CD8-positive, alpha-beta T cell (primary cell): ENCODE measurements at regions of chr5 and their contacts with region 1.

Region 1: GRCh38 chr5:52915176-52915875 is 73.8 kb upstream of the ITGA2 start:
- DNase-seq: peak; percentile 10 to 76 (median 45)
- ATAC-seq: peak; percentile 97
- H3K4me3 ChIP-seq: no peak overlapping the region
- H3K4me3 Mint-ChIP-seq: peak overlapping the region; percentile 50
- H3K27ac ChIP-seq: no peak overlapping the region
- H3K27ac Mint-ChIP-seq: no peak overlapping the region
- H3K4me1 ChIP-seq: no peaks in the 10 kb centered on the region
- H3K4me1 Mint-ChIP-seq: peaks cover 6% of the 10 kb centered on the region
- H3K27me3 ChIP-seq: no peaks in the 10 kb centered on the region
- H3K27me3 Mint-ChIP-seq: no peaks in the 10 kb centered on the region
- CTCF ChIP-seq: peak; percentile 88

Region 2: DNA sequence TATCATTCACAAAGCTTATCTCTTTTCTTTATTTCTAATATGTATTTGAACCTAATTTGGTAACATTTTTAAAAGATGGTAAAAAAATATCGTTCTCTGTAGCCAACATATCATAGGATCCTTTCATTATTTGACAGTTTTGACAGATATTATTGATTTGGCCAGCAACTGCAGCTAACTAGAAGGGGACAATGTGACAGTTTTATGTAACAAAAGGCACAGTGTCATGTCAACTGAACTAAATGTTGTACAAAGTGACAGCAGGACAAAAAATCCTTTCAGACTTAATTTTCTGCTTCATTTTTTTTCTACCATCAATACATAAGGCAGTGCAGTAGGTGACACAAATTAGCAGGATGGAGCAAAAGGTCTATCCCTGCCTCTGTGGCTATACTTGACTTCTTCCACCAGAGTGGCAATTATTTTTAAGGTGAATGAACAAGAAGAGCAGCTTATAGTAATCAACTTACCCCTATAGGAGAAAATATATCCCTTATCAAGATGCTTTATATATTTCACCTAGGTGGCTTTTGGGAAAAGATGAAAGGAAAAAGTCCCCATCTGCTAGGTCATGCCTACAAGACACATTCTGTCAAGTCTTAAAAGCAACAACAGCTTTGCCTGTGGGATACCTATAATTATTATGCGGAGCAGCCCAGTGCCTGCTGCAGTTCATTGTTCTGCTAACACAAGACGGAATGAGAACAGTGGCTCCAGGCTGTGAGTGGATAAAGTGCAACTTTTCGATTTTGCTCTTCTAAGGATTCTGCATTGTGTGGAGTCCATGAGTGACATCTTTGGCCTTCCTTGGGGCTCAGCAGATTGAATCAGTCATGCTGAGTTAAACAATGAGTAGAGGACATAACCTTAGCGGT is 837.1 kb before region 1 on chr5:
- CTCF ChIA-PET with region 1: no interaction called
- POLR2A ChIA-PET with region 1: no interaction called
- intact Hi-C with region 1: no loop called
- DNase-seq: no peak
- ATAC-seq: no peak
- H3K4me3 ChIP-seq: no peak overlapping the region
- H3K4me3 Mint-ChIP-seq: no peak overlapping the region
- H3K27ac ChIP-seq: no peak overlapping the region
- H3K27ac Mint-ChIP-seq: no peak overlapping the region
- H3K4me1 ChIP-seq: no peaks in the 10 kb centered on the region
- H3K4me1 Mint-ChIP-seq: no peaks in the 10 kb centered on the region
- H3K27me3 ChIP-seq: no peaks in the 10 kb centered on the region
- H3K27me3 Mint-ChIP-seq: no peaks in the 10 kb centered on the region
- CTCF ChIP-seq: no peak

Region 3: GRCh38 chr5:52665559-52665958 is 249.8 kb before region 1 on chr5:
- CTCF ChIA-PET with region 1: interaction called, 6 read pairs
- POLR2A ChIA-PET with region 1: no interaction called
- intact Hi-C with region 1: loop called (anchors 1 to 10 kb)
- DNase-seq: no peak
- ATAC-seq: no peak
- H3K4me3 ChIP-seq: no peak overlapping the region
- H3K4me3 Mint-ChIP-seq: no peak overlapping the region
- H3K27ac ChIP-seq: no peak overlapping the region
- H3K27ac Mint-ChIP-seq: no peak overlapping the region
- H3K4me1 ChIP-seq: no peaks in the 10 kb centered on the region
- H3K4me1 Mint-ChIP-seq: peaks cover 2% of the 10 kb centered on the region
- H3K27me3 ChIP-seq: no peaks in the 10 kb centered on the region
- H3K27me3 Mint-ChIP-seq: no peaks in the 10 kb centered on the region
- CTCF ChIP-seq: no peak

Region 4: DNA sequence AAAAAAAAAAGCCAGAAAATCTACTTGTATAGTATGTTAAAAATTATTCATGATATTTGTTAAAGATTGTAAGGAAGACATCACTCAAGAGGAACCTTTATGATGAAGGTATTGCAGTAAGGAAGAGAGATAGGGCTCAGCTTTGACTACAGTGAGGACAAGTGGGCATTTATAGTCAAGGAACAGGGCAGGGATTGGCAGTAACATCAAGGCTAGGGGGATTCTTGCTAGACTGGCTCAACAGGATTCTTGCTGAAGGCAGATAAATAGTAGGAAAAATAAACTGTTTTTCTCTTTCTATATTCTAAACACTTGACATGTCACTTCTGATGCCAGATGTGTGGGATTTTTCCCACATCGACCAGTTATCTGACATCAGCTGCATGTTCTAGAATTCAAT is 30.9 kb before region 1 on chr5:
- CTCF ChIA-PET with region 1: no interaction called
- POLR2A ChIA-PET with region 1: no interaction called
- intact Hi-C with region 1: no loop called
- DNase-seq: no peak
- ATAC-seq: no peak
- H3K4me3 ChIP-seq: no peak overlapping the region
- H3K4me3 Mint-ChIP-seq: no peak overlapping the region
- H3K27ac ChIP-seq: no peak overlapping the region
- H3K27ac Mint-ChIP-seq: no peak overlapping the region
- H3K4me1 ChIP-seq: no peaks in the 10 kb centered on the region
- H3K4me1 Mint-ChIP-seq: no peaks in the 10 kb centered on the region
- H3K27me3 ChIP-seq: no peaks in the 10 kb centered on the region
- H3K27me3 Mint-ChIP-seq: no peaks in the 10 kb centered on the region
- CTCF ChIP-seq: no peak

Region 5: DNA sequence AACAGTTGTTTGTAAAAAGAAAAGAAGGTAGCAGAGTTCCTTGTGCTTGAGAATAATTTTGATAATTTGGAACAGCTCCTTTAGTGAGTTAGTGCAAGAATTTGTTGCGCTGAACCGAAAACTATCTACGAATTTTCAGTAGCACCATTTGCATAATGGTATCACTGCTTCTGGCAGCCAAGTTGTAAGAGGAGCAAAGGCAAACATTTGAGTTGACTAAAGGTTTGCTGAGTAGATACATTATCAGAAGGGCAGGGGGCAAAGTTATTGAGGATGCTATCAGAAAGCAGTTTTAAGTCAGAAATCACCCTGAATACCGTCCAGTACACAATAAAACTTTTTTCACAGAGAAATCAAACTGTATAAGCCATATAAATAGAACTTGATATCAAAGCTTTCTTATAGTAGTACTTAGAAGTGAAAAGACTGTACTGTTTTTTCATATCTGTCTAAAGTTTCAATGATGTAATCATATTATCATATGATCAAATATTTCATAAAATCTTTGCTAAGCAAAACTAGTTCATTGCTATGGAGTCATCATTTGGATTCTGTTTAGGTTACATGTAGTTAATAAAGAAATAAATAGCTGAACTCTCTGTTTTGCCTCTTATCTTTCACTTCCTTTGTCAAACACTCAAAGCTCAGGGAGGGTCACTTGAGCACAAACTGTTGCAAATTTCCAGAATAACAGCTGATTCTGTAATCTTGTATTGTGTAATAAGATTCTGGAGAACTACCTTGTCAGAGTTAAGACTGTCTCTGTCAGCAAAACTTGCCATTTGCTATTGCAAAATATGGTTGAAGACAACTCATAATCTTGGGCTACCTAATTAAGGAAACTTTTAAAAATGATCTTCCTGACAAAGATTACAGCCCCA is 376.0 kb after region 1 on chr5:
- CTCF ChIA-PET with region 1: no interaction called
- POLR2A ChIA-PET with region 1: no interaction called
- intact Hi-C with region 1: no loop called
- DNase-seq: no peak
- ATAC-seq: no peak
- H3K4me3 ChIP-seq: no peak overlapping the region
- H3K4me3 Mint-ChIP-seq: no peak overlapping the region
- H3K27ac ChIP-seq: no peak overlapping the region
- H3K27ac Mint-ChIP-seq: no peak overlapping the region
- H3K4me1 ChIP-seq: no peaks in the 10 kb centered on the region
- H3K4me1 Mint-ChIP-seq: no peaks in the 10 kb centered on the region
- H3K27me3 ChIP-seq: no peaks in the 10 kb centered on the region
- H3K27me3 Mint-ChIP-seq: peaks cover 8% of the 10 kb centered on the region
- CTCF ChIP-seq: no peak